Adrenal gland (tissue), 19 donors: ENCODE measurements at regions of chr17 and their contacts with region 1.

Region 1: GRCh38 chr17:77429919-77430752 is 289.4 kb downstream of the SEC14L1 start:
- DNase-seq: peak; percentile 92 to 98 (median 96)
- H3K4me3 ChIP-seq: no peak overlapping the region
- H3K27ac ChIP-seq: peak overlapping the region; percentile 10 to 98 (median 94)
- H3K4me1 ChIP-seq: peaks cover 71 to 94% of the 10 kb centered on the region in 2 donors
- H3K27me3 ChIP-seq: no peaks in the 10 kb centered on the region
- CTCF ChIP-seq: peak; percentile 67 to 89 (median 83)
- POLR2A ChIP-seq: peak in 1 of 2 donors; percentile 25

Region 2: DNA sequence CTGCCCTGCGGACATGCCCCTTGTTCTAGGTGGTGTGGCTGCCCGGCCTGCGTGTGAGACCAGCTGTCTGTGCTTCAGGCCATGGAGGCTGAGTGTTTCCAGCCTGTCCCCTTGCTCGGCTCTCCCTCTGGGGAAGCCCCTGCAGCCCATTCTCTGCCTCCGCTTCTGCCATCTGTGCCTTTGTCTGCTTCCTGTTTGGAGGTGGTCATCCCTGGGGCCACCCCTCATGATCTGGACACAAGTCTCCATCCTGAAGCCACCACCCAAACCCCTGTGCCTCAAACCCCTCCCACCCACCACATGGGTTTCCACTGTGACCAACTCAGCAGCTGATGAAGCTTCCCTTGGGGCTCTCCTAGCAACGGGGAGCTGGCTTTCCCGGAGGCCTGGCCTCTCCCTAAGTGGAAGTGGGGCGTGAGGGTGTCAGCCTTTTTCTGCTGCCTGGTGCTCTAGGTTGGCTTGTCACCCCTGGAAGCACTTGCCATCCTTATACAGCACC is 104.5 kb before region 1 on chr17:
- intact Hi-C with region 1: loop called (anchors 5 kb)
- DNase-seq: peak in 1 of 7 donors; percentile 23
- H3K4me3 ChIP-seq: no peak overlapping the region
- H3K27ac ChIP-seq: peak overlapping the region in 4 of 5 donors; percentile 7 to 99 (median 72)
- H3K4me1 ChIP-seq: peaks cover 35 to 47% of the 10 kb centered on the region in 2 donors
- H3K27me3 ChIP-seq: no peaks in the 10 kb centered on the region
- CTCF ChIP-seq: no peak
- POLR2A ChIP-seq: no peak

Region 3: GRCh38 chr17:77331301-77331864 is 98.8 kb before region 1 on chr17:
- intact Hi-C with region 1: loop called (anchors 5 kb)
- DNase-seq: peak; percentile 89 to 97 (median 96)
- H3K4me3 ChIP-seq: no peak overlapping the region
- H3K27ac ChIP-seq: peak overlapping the region in 3 of 5 donors; percentile 48 to 64 (median 64)
- H3K4me1 ChIP-seq: peaks cover 4 to 10% of the 10 kb centered on the region in 2 donors
- H3K27me3 ChIP-seq: no peaks in the 10 kb centered on the region
- CTCF ChIP-seq: peak; percentile 91 to 97 (median 96)
- POLR2A ChIP-seq: no peak

Region 4: DNA sequence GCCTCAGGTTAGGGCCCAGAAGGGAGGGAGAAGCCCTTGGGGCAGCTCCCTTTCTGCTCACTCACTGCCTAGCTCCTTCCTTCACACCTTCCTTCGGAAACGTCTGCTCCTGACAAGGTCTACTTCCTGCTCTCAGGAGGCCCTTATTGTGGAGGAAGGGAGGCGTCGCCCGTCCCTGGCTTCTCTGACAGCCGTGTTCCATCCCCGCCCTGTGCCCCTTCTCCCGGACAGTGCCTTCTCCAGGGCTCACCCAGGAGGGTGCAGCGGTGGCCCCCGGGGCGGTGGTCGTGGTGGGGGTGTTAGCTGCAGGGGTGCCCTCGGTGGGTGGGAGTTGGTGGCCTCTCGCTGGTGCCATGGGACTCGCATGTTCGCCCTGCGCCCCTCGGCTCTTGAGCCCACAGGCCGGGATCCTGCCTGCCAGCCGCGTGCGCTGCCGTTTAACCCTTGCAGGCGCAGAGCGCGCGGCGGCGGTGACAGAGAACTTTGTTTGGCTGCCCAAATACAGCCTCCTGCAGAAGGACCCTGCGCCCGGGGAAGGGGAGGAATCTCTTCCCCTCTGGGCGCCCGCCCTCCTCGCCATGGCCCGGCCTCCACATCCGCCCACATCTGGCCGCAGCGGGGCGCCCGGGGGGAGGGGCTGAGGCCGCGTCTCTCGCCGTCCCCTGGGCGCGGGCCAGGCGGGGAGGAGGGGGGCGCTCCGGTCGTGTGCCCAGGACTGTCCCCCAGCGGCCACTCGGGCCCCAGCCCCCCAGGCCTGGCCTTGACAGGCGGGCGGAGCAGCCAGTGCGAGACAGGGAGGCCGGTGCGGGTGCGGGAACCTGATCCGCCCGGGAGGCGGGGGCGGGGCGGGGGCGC is 57.5 kb before region 1 on chr17:
- intact Hi-C with region 1: loop called in 1 of 2 experiments (anchors 5 kb)
- DNase-seq: peak; percentile 83 to 94 (median 90)
- H3K4me3 ChIP-seq: peak overlapping the region in 2 of 4 donors; percentile 51 to 78
- H3K27ac ChIP-seq: peak overlapping the region; percentile 90 to 99 (median 96)
- H3K4me1 ChIP-seq: peaks cover 41 to 64% of the 10 kb centered on the region in 2 donors
- H3K27me3 ChIP-seq: no peaks in the 10 kb centered on the region
- CTCF ChIP-seq: no peak
- POLR2A ChIP-seq: peak in 1 of 2 donors; percentile 30

Region 5: GRCh38 chr17:77391668-77392375 is 38.3 kb before region 1 on chr17:
- intact Hi-C with region 1: loop called in 1 of 2 experiments (anchors 5 kb)
- DNase-seq: peak in 2 of 7 donors; percentile 44 to 52
- H3K4me3 ChIP-seq: no peak overlapping the region
- H3K27ac ChIP-seq: peak overlapping the region; percentile 15 to 89 (median 76)
- H3K4me1 ChIP-seq: peaks cover 69 to 85% of the 10 kb centered on the region in 2 donors
- H3K27me3 ChIP-seq: no peaks in the 10 kb centered on the region
- CTCF ChIP-seq: no peak
- POLR2A ChIP-seq: no peak

Region 6: DNA sequence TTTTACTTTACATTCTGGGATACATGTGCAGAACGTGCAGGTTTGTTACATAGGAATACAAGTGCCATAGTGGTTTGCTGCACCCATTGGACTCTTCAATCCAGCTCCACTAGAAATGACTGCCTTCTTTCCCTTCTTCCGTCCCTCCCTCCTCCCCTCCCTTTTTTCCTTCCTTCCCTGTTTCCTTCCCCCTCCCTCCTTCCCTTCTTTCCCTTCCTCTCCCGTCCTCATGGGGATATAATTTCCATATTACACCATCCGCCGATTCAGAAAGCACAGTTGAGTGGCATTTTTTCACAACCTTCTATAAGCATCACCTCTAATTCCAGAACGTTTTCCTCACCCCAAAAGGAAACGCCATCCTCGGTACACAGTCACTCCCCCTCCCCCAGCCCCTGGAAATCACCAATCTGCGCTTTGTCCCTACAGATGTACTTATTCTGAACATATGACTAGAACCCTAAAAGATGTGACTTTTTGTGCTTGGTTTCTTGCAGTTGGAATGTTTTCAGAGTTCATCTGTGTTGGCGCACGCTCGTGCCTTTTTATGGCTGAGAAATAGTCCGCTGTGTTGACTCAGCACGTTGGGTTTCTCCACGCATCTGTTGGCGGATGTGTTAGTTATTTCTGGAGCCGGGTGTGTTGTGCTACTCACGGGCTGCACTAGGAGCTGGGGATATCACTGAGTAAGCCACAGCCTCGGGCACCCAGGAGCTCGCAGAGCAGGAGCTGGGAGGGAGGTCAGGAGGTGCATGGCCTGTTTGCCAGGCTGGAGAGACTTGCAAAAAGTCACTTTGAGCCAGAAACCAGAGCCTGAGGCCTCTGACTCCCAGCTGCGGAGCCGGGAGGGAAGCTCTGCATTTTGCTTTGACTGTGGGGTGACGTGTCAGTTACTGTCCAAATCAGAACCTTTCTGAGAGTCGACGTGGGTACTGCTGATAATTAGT is 47.1 kb after region 1 on chr17:
- intact Hi-C with region 1: loop called (anchors 5 to 10 kb)
- DNase-seq: peak; percentile 63 to 94 (median 90)
- H3K4me3 ChIP-seq: no peak overlapping the region
- H3K27ac ChIP-seq: peak overlapping the region in 4 of 5 donors; percentile 60 to 83 (median 80)
- H3K4me1 ChIP-seq: peaks cover 49 to 100% of the 10 kb centered on the region in 2 donors
- H3K27me3 ChIP-seq: no peaks in the 10 kb centered on the region
- CTCF ChIP-seq: peak in 4 of 6 experiments; percentile 18 to 45 (median 31)
- POLR2A ChIP-seq: peak in 1 of 2 donors; percentile 60

Region 7: GRCh38 chr17:77494664-77495435 is 64.7 kb after region 1 on chr17:
- intact Hi-C with region 1: loop called in 1 of 2 experiments (anchors 2 kb)
- DNase-seq: peak; percentile 67 to 91 (median 83)
- H3K4me3 ChIP-seq: no peak overlapping the region
- H3K27ac ChIP-seq: peak overlapping the region in 2 of 5 donors; percentile 2 to 10
- H3K4me1 ChIP-seq: peaks cover 0 to 14% of the 10 kb centered on the region in 2 donors
- H3K27me3 ChIP-seq: no peaks in the 10 kb centered on the region
- CTCF ChIP-seq: peak; percentile 94 to 99 (median 98)
- POLR2A ChIP-seq: no peak